ENCODE measurements at regions of chr13 and their contacts with region 1.

Region 1: DNA sequence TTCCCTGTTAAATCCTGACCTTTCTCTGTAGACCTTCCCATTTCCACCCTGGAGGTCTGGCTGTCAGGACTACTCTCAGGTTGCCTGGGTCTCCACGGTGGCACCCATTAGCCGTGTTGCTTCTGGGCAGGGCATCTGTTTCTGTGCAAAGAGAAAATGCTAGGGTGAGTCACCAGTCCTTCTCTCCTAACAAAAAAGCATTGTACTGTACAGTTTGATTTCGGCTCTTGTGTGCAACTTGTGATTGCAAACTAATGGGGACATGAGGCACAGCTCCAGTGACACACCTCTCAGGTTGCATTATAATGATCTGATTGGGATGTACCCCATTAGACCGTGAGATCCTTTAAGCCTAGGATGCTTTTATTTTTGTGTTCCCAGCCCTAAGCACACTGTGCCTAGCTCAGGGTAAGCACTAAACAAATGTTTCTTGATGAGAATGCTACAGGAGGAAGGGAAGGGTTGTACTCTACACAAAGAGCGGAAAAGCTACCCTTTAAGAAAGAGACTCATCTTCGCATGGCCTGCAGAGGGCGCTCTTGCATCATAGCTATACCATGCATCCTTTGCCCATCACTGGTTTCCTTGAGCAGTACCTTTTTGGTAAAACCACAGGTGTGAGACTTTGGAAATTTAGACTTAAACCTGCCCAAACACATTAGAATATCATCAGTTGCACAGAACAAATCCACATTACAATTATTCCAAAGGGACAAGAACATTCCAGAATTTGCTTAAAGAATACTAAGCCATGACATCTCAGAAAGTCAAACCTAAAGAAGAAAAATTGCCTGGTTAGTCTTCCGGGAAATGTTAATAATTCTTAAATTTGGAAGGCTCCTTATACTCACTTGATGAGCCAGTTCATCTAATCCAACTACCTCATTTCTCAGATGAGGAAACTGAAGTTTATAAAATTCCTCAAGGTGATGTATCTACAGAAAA is 20.3 kb upstream of the TRIM13 start:
- DNase-seq: no peak
- H3K4me3 ChIP-seq: no peak overlapping the region
- H3K27ac ChIP-seq: no peak overlapping the region
- H3K4me1 ChIP-seq: no peaks in the 10 kb centered on the region
- H3K27me3 ChIP-seq: no peaks in the 10 kb centered on the region
- CTCF ChIP-seq: peak; percentile 58 to 77 (median 72)
- POLR2A ChIP-seq: no peak

Region 2: DNA sequence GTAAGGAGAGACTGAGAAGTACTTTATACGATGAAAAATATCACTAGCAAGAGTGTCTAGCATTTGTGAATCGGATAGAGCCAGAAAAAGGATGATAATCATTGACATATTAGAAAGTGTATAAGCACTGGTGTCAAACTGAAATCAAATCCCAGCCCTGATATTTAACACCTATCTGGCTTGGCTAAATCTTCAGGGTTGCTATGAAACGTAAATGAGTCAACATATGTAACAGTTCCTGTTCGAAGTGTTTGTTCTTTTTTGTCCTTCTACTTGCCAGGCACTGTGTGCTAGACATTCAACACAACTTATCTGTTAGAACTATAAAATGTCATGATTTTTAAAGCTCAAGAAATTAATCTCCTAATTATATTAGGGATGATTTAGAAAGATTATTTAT is 1403.7 kb after region 1 on chr13:
- intact Hi-C with region 1: loop called (anchors 10 kb)
- DNase-seq: no peak
- H3K4me3 ChIP-seq: no peak overlapping the region
- H3K27ac ChIP-seq: no peak overlapping the region
- H3K4me1 ChIP-seq: no peaks in the 10 kb centered on the region
- H3K27me3 ChIP-seq: no peaks in the 10 kb centered on the region
- CTCF ChIP-seq: no peak
- POLR2A ChIP-seq: no peak